IMR-90 (cell line): ENCODE measurements at regions of chr4 and their contacts with region 1.

Region 1: GRCh38 chr4:176780990-176781738 is 11.6 kb downstream of the VEGFC start:
- DNase-seq: no peak
- ATAC-seq: peak; percentile 3; the same call in 1 of the 2 replicates
- H3K4me3 ChIP-seq: no peak overlapping the region
- H3K27ac ChIP-seq: peak overlapping the region; percentile 32; the same call in 1 of the 2 replicates
- H3K4me1 ChIP-seq: peaks cover 14% of the 10 kb centered on the region
- H3K27me3 ChIP-seq: no peaks in the 10 kb centered on the region
- CTCF ChIP-seq: no peak
- POLR2A ChIP-seq: no peak
- RAD21 ChIP-seq: no peak

Region 2: GRCh38 chr4:175833574-175834311 is 947.4 kb before region 1 on chr4:
- CTCF ChIA-PET with region 1: no interaction called
- POLR2A ChIA-PET with region 1: no interaction called
- dilution Hi-C with region 1: no loop called
- in situ Hi-C with region 1: no loop called
- intact Hi-C with region 1: no loop called
- DNase-seq: no peak
- ATAC-seq: no peak
- H3K4me3 ChIP-seq: no peak overlapping the region
- H3K27ac ChIP-seq: no peak overlapping the region
- H3K4me1 ChIP-seq: no peaks in the 10 kb centered on the region
- H3K27me3 ChIP-seq: no peaks in the 10 kb centered on the region
- CTCF ChIP-seq: no peak
- POLR2A ChIP-seq: no peak
- RAD21 ChIP-seq: no peak

Region 3: GRCh38 chr4:176601124-176601523 is 180.0 kb before region 1 on chr4:
- CTCF ChIA-PET with region 1: no interaction called
- POLR2A ChIA-PET with region 1: no interaction called
- dilution Hi-C with region 1: no loop called
- in situ Hi-C with region 1: no loop called
- intact Hi-C with region 1: no loop called
- DNase-seq: no peak
- ATAC-seq: no peak
- H3K4me3 ChIP-seq: no peak overlapping the region
- H3K27ac ChIP-seq: no peak overlapping the region
- H3K4me1 ChIP-seq: no peaks in the 10 kb centered on the region
- H3K27me3 ChIP-seq: no peaks in the 10 kb centered on the region; the same call in 1 of the 2 replicates
- CTCF ChIP-seq: no peak
- POLR2A ChIP-seq: no peak
- RAD21 ChIP-seq: no peak

Region 4: GRCh38 chr4:176680668-176681180 is 100.4 kb before region 1 on chr4:
- CTCF ChIA-PET with region 1: no interaction called
- POLR2A ChIA-PET with region 1: no interaction called
- dilution Hi-C with region 1: no loop called
- in situ Hi-C with region 1: no loop called
- intact Hi-C with region 1: loop called (anchors 2 kb)
- DNase-seq: no peak
- ATAC-seq: no peak
- H3K4me3 ChIP-seq: no peak overlapping the region
- H3K27ac ChIP-seq: no peak overlapping the region
- H3K4me1 ChIP-seq: 0 out of 2 replicates have a peak, but pooled peaks cover 2% of the 10 kb centered on the region
- H3K27me3 ChIP-seq: no peaks in the 10 kb centered on the region
- CTCF ChIP-seq: no peak
- POLR2A ChIP-seq: no peak
- RAD21 ChIP-seq: no peak

Region 5: GRCh38 chr4:176745902-176746301 is 35.3 kb before region 1 on chr4:
- CTCF ChIA-PET with region 1: no interaction called
- POLR2A ChIA-PET with region 1: no interaction called
- dilution Hi-C with region 1: no loop called
- in situ Hi-C with region 1: no loop called
- intact Hi-C with region 1: no loop called
- DNase-seq: no peak
- ATAC-seq: no peak
- H3K4me3 ChIP-seq: no peak overlapping the region
- H3K27ac ChIP-seq: no peak overlapping the region
- H3K4me1 ChIP-seq: peaks cover 15% of the 10 kb centered on the region
- H3K27me3 ChIP-seq: no peaks in the 10 kb centered on the region
- CTCF ChIP-seq: no peak
- POLR2A ChIP-seq: no peak
- RAD21 ChIP-seq: no peak